Mammary epithelial cell (primary cell): ENCODE measurements at regions of chrX and their contacts with region 1.

Region 1: DNA sequence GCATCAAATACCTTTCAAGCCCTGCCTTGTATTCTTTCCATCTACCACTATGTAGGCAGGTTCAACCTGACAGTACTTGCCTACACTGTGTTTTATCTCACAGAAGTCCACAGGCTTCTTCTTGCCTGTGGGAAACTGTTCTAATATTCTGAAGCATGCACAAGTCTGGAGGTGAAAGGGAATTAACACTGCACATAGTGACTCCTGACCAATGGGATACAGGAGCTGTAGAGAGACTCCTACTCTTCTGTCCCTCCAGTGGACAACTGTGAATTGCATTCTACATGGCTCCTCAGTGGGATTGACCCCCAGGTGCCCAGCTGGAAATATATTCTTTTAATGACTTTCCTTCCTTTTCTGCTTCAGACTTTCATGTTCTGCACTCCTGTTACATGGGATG is 8.3 kb upstream of the YIPF6 start:
- DNase-seq: peak; percentile 30
- H3K4me3 ChIP-seq: no peak overlapping the region
- H3K27ac ChIP-seq: no peak overlapping the region
- H3K4me1 ChIP-seq: no peaks in the 10 kb centered on the region
- H3K27me3 ChIP-seq: no peaks in the 10 kb centered on the region
- CTCF ChIP-seq: peak; percentile 47 to 49

Region 2: DNA sequence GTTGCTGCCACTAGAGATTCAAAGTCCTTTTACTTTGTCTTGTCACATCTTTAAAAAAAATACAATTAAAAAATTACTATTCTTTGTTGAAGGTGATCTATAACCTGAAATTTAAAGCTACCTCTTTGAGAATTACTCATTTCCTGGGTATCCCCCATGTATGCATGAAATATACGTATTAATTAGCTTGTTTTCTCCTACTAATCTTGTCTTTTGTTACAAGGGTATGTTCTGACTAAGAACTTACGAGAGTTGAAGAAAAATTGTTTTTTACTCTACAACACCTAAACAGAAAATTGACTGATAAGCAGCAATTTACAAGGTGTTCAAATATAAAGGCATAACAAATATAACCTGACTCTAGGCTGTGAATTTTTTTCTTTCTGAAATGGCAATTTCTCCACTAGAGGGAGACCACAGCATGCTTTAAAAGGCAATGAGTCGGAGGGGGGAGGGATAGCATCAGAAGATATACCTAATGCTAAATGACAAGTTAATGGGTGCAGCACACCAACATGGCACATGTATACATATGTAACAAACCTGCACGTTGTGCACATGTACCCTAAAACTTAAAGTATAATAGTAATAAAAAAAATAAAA is 306.9 kb before region 1 on chrX:
- CTCF ChIA-PET with region 1: no interaction called
- dilution Hi-C with region 1: no loop called
- in situ Hi-C with region 1: no loop called
- intact Hi-C with region 1: no loop called
- DNase-seq: no peak
- H3K4me3 ChIP-seq: no peak overlapping the region
- H3K27ac ChIP-seq: no peak overlapping the region
- H3K4me1 ChIP-seq: peaks cover 4% of the 10 kb centered on the region
- H3K27me3 ChIP-seq: no peaks in the 10 kb centered on the region
- CTCF ChIP-seq: peak; percentile 43 to 54

Region 3: DNA sequence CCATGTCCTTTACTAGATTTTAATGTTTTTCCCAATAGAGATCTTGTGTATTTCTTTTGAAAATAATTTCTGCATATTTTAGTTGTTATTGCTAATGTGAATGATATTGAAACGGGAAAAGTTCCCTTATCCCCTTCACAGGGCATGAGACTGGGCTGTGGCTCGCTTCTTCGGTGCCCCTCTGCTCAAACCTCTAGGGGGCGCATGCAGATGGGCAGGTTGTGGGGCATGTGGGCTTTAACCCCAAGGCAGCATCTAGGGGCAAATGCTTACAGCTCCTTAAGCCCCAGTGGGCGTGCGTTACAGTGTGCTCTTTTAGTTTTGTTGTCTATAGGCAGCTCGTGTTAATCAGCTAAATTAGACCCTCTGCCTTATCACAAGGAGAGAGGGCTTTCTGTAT is 252.0 kb before region 1 on chrX:
- CTCF ChIA-PET with region 1: interaction called, 16 read pairs
- dilution Hi-C with region 1: no loop called
- in situ Hi-C with region 1: no loop called
- intact Hi-C with region 1: no loop called
- DNase-seq: no peak
- H3K4me3 ChIP-seq: no peak overlapping the region
- H3K27ac ChIP-seq: no peak overlapping the region
- H3K4me1 ChIP-seq: no peaks in the 10 kb centered on the region
- H3K27me3 ChIP-seq: no peaks in the 10 kb centered on the region
- CTCF ChIP-seq: peak; percentile 39 to 52